ENCODE measurements at regions of chrX and their contacts with region 1.

Region 1: DNA sequence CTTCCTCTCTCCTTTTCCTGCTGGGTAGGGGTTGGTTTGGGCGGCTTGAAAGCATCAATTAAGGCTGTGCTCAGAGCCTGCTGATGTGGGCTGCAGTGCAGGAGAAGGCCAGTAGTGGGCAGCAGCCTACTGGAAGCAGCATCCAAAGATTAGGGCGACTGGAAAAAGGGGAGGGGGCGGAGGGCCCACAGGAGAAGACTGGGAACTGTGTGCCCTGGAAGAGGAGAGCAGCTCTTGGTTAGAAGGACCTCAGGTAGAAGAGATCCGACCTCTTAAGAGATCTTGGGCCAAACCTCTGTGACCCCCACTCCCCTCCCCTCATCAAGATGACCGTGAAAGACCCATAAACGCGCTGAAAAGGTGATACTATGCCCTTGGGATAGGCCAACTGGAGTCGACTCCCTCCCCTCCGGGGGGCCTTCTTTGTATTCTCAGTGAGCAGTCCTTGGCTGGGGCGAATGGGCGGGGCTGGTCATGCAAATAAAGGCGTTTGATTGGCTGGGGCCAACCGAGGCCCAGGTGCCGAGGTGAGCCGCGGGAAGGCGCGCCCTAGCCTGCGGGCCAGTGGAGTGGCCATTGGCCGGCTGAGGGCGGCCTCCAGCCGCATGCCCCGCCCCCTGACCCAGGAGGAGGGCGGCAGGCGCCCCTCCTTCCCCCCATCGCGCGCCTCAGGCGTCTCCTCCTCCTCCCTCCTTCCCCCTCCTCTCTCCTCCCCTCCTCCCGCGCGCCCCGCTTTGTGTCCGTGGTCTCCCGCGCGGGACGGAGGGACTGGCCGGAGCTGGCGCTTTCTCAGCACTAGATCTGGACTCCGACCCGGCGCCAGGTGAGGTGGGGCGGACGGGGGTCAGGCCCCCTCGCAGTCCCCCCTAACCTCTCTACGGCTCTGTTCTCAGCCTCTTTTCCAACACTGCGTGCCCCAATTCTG is 10.1 kb downstream of the DLG3 start:
- DNase-seq: peak; percentile 53
- ATAC-seq: peak; percentile 76
- H3K4me3 ChIP-seq: peak overlapping the region; percentile 56
- H3K27ac ChIP-seq: peak overlapping the region; percentile 69
- H3K4me1 ChIP-seq: no peaks in the 10 kb centered on the region
- H3K27me3 ChIP-seq: no peaks in the 10 kb centered on the region; the same call in 1 of the 2 replicates
- CTCF ChIP-seq: peak; percentile 76
- POLR2A ChIP-seq: no peak
- RAD21 ChIP-seq: peak; percentile 77

Region 2: GRCh38 chrX:70386235-70386634 is 68.5 kb before region 1 on chrX:
- CTCF ChIA-PET with region 1: no interaction called
- POLR2A ChIA-PET with region 1: no interaction called
- dilution Hi-C with region 1: no loop called
- in situ Hi-C with region 1: no loop called
- intact Hi-C with region 1: no loop called
- DNase-seq: peak; percentile 37
- ATAC-seq: no peak
- H3K4me3 ChIP-seq: no peak overlapping the region
- H3K27ac ChIP-seq: no peak overlapping the region
- H3K4me1 ChIP-seq: no peaks in the 10 kb centered on the region
- H3K27me3 ChIP-seq: no peaks in the 10 kb centered on the region
- CTCF ChIP-seq: no peak
- POLR2A ChIP-seq: no peak
- RAD21 ChIP-seq: no peak

Region 3: GRCh38 chrX:70476934-70477733 is 22.4 kb after region 1 on chrX:
- CTCF ChIA-PET with region 1: no interaction called
- POLR2A ChIA-PET with region 1: no interaction called
- dilution Hi-C with region 1: no loop called
- in situ Hi-C with region 1: no loop called
- intact Hi-C with region 1: loop called (anchors 1 kb)
- DNase-seq: peak; percentile 69
- ATAC-seq: peak; percentile 61
- H3K4me3 ChIP-seq: no peak overlapping the region; the same call in 1 of the 2 replicates
- H3K27ac ChIP-seq: peak overlapping the region; percentile 77
- H3K4me1 ChIP-seq: peaks cover 22% of the 10 kb centered on the region
- H3K27me3 ChIP-seq: no peaks in the 10 kb centered on the region; the same call in 1 of the 2 replicates
- CTCF ChIP-seq: no peak
- POLR2A ChIP-seq: peak; percentile 42; the same call in 1 of the 2 replicates
- RAD21 ChIP-seq: no peak

Region 4: DNA sequence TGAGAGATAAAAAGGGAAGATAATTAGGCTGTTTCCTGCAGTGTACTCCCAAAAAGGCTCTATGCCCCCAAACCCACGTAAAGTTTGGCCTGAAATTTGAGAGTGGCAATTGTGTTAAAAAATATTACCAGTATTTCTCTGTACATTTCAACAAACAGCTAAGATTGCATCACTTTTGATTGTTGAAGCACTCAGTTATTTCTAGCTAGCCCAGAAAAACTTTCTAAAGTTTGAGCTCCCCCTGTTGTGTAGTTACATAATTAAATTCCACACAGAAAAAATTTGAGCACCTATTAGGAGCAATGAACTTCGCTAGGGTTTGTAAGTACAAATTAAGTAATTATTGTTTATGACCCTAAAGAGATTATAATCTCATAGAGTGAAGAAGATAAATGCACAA is 99.4 kb after region 1 on chrX:
- CTCF ChIA-PET with region 1: no interaction called
- POLR2A ChIA-PET with region 1: no interaction called
- dilution Hi-C with region 1: no loop called
- in situ Hi-C with region 1: no loop called
- intact Hi-C with region 1: loop called (anchors 1 kb)
- DNase-seq: peak; percentile 28
- ATAC-seq: peak; percentile 37
- H3K4me3 ChIP-seq: no peak overlapping the region
- H3K27ac ChIP-seq: no peak overlapping the region
- H3K4me1 ChIP-seq: no peaks in the 10 kb centered on the region
- H3K27me3 ChIP-seq: peaks cover 3% of the 10 kb centered on the region
- CTCF ChIP-seq: peak; percentile 34
- POLR2A ChIP-seq: no peak
- RAD21 ChIP-seq: peak; percentile 26; the same call in 1 of the 2 replicates

Region 5: DNA sequence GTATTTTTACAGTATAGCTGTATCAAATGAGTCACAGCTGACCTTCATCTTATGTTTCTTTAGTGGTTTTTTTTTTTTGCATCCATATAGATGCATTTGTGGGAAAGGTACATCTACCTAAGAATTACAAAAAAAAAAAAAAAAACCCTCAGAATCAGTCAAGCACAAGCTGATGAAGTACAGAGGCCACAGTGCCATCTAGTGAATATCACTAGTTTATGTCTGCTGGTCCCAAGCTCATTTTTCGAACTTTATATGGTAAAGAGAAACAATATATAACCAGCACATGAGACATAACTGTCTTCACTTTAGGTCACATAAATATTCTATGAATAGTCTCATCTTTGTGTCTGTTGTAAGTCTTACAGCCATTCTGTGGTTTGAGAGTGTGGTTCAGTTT is 210.0 kb after region 1 on chrX:
- CTCF ChIA-PET with region 1: interaction called, 3 read pairs
- POLR2A ChIA-PET with region 1: no interaction called
- dilution Hi-C with region 1: no loop called
- in situ Hi-C with region 1: no loop called
- intact Hi-C with region 1: loop called (anchors 1 kb)
- DNase-seq: peak; percentile 30
- ATAC-seq: peak; percentile 54; the same call in 1 of the 2 replicates
- H3K4me3 ChIP-seq: no peak overlapping the region
- H3K27ac ChIP-seq: no peak overlapping the region
- H3K4me1 ChIP-seq: no peaks in the 10 kb centered on the region
- H3K27me3 ChIP-seq: no peaks in the 10 kb centered on the region; the same call in 1 of the 2 replicates
- CTCF ChIP-seq: peak; percentile 50
- POLR2A ChIP-seq: no peak
- RAD21 ChIP-seq: peak; percentile 52

Region 6: DNA sequence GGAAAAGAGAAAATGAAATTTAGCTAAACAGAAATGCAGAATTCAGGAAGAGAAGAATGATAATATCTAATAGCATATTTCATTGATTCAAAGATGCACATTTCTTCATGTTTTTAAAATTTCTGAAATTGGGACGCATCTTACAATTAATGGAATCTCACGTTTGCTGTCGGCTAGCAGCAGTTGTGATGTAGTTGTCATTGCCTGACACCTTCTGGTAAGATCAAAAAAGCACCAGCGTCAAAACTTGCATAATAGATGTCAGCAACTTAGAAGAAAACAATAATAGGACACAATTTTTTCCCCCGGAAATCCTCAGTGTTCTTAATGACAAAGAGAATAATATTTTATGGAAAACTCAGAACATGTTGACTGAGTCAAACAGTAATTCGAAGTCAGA is 506.0 kb after region 1 on chrX:
- CTCF ChIA-PET with region 1: no interaction called
- POLR2A ChIA-PET with region 1: no interaction called
- dilution Hi-C with region 1: no loop called
- in situ Hi-C with region 1: no loop called
- intact Hi-C with region 1: loop called (anchors 10 kb)
- DNase-seq: no peak
- ATAC-seq: no peak
- H3K4me3 ChIP-seq: no peak overlapping the region
- H3K27ac ChIP-seq: no peak overlapping the region
- H3K4me1 ChIP-seq: no peaks in the 10 kb centered on the region
- H3K27me3 ChIP-seq: peaks cover 4% of the 10 kb centered on the region
- CTCF ChIP-seq: 0 out of 2 replicates have a peak, but pooled peaks have one; percentile 6
- POLR2A ChIP-seq: no peak
- RAD21 ChIP-seq: no peak